PC-9 (cell line): ENCODE measurements at regions of chr5 and their contacts with region 1.

Region 1: GRCh38 chr5:41831155-41831554 is 39.1 kb downstream of the OXCT1 start:
- DNase-seq: no peak
- H3K4me3 ChIP-seq: no peak overlapping the region
- H3K27ac ChIP-seq: no peak overlapping the region
- H3K4me1 ChIP-seq: no peaks in the 10 kb centered on the region
- H3K27me3 ChIP-seq: no peaks in the 10 kb centered on the region
- CTCF ChIP-seq: no peak

Region 2: GRCh38 chr5:41770799-41771198 is 60.4 kb before region 1 on chr5:
- CTCF ChIA-PET with region 1: no interaction called
- POLR2A ChIA-PET with region 1: interaction called, 15 read pairs
- intact Hi-C with region 1: no loop called
- DNase-seq: no peak
- H3K4me3 ChIP-seq: no peak overlapping the region
- H3K27ac ChIP-seq: no peak overlapping the region
- H3K4me1 ChIP-seq: no peaks in the 10 kb centered on the region
- H3K27me3 ChIP-seq: no peaks in the 10 kb centered on the region
- CTCF ChIP-seq: no peak

Region 3: GRCh38 chr5:41869151-41869738 is 38.1 kb after region 1 on chr5:
- CTCF ChIA-PET with region 1: no interaction called
- POLR2A ChIA-PET with region 1: no interaction called
- intact Hi-C with region 1: no loop called
- DNase-seq: no peak
- H3K4me3 ChIP-seq: peak overlapping the region; percentile 67; the same call in 1 of the 2 replicates
- H3K27ac ChIP-seq: no peak overlapping the region
- H3K4me1 ChIP-seq: 0 out of 2 replicates have a peak, but pooled peaks cover 4% of the 10 kb centered on the region
- H3K27me3 ChIP-seq: peaks cover 24% of the 10 kb centered on the region
- CTCF ChIP-seq: no peak

Region 4: DNA sequence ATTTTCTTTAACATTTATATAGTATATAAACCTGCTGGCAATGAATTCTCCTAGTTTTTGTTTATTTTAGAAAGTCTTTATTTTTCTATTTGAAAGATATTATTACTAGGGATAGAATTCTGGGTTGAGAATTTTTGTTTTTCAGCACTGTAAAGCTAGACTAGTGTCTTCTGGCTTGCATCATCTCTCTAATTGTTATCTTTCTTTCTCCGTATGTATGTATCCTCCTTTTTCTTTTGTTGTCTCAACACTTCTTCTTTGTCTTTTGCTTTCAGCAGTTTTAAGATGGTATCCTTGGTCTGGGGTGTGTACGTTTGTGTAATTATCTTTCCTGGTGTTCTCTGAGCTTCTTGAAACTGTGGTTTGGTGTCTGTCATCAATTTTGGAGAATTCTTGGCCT is 142.7 kb after region 1 on chr5:
- CTCF ChIA-PET with region 1: no interaction called
- POLR2A ChIA-PET with region 1: no interaction called
- intact Hi-C with region 1: no loop called
- DNase-seq: no peak
- H3K4me3 ChIP-seq: no peak overlapping the region
- H3K27ac ChIP-seq: no peak overlapping the region
- H3K4me1 ChIP-seq: no peaks in the 10 kb centered on the region
- H3K27me3 ChIP-seq: no peaks in the 10 kb centered on the region
- CTCF ChIP-seq: no peak